ENCODE measurements at regions of chr14 and their contacts with region 1.

Region 1: DNA sequence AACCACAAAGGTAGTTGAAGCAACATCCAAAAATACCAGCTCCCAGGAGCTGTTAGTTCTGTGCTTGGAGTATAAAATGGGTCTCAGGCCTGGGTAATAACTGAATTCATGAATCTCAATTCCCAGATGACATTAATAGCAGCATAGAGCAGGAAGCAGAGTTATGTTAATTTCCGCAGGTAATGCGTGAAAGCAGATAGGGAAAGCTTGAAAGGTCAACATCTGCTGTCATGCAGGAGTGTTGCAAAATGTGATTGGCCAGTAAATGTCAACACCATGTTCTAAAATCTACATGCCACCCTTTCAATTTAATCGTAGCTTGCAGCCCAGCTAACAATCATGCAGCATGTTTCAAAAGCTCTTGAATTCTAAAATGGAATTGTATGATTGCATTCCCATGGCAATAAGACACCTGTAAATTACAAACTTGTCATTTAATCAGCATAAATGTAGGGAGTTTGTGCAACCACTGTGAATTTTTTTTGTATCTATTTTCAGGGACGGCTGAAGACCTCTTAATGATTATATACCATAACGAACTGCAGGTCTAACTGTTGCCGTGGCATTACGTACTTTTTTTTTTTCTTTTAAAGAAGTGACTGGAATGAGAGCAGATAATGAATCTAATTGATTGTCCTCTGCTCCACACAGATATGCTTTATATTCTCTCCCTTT is 635.8 kb upstream of the FOXG1 start:
- DNase-seq: no peak
- ATAC-seq: no peak

Region 2: DNA sequence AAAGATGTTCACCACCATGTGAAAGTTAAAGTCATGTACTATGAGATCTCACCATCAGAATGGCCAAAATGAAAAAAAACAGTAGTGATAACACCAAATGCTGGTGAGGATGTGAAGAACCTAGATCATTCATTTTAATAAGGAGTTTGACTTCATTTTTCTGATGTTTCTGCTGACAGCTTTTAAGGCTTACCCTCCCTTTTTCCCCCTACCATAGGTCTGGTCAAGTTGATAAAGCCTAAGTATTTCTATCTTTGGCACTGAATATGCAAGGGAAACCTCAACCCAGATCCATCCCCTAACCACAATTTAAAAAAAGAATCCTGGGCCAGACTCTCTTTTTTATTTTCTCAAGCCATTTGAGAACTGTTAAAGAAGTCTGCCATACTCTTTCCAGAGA is 53.7 kb before region 1 on chr14:
- intact Hi-C with region 1: loop called (anchors 2 kb)
- DNase-seq: no peak
- ATAC-seq: no peak